ENCODE measurements at regions of chr16 and their contacts with region 1.

Region 1: DNA sequence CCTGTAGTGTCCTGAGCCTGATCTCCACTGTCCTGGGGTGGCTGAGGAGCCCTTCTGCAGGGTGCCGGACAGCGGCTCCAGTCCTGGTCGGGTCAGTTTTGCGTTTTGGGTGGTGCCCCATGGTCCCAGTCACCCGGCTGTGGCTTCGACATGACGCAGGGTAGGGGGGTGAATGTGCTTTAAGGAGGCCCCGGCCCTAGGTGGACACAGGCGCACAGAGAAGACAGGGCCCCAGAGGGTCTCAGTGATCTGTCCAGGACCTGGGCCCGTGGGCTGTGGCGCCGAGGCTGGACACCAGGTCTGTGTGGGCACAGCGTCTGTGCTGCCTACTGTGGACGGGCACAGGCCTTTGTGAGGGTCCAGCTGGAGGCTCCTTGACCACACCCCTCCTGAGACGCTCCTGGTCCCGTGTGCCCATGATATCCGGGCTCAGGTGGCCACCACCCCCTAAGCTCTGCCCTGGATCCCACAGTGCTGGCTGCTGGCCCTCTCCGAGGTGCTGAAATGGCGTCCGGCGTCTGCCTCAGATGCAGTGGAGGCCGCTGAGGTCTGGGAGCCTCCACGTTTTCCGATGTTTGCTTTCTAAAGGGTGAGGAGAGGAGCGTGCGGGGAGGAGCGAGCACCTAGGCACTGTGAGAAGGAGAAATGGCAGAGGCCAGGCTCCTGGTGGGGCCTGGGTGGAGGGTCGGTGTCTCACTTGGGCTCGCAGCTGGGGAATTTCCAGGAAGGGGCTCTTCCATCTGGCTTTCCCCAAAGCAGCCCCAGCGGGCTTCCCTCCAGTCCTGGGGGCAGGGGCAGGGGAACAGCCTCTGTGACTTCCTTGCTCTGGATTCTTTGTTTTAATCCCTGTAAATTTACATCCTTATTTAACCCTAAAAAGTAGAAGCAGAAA is 56.1 kb upstream of the ACSF3 start:
- DNase-seq: no peak
- ATAC-seq: no peak
- H3K4me3 ChIP-seq: no peak overlapping the region
- H3K27ac ChIP-seq: no peak overlapping the region
- H3K4me1 ChIP-seq: no peaks in the 10 kb centered on the region
- H3K27me3 ChIP-seq: peaks cover 25 to 48% (median 45%) of the 10 kb centered on the region in 3 donors
- CTCF ChIP-seq: no peak
- POLR2A ChIP-seq: no peak

Region 2: DNA sequence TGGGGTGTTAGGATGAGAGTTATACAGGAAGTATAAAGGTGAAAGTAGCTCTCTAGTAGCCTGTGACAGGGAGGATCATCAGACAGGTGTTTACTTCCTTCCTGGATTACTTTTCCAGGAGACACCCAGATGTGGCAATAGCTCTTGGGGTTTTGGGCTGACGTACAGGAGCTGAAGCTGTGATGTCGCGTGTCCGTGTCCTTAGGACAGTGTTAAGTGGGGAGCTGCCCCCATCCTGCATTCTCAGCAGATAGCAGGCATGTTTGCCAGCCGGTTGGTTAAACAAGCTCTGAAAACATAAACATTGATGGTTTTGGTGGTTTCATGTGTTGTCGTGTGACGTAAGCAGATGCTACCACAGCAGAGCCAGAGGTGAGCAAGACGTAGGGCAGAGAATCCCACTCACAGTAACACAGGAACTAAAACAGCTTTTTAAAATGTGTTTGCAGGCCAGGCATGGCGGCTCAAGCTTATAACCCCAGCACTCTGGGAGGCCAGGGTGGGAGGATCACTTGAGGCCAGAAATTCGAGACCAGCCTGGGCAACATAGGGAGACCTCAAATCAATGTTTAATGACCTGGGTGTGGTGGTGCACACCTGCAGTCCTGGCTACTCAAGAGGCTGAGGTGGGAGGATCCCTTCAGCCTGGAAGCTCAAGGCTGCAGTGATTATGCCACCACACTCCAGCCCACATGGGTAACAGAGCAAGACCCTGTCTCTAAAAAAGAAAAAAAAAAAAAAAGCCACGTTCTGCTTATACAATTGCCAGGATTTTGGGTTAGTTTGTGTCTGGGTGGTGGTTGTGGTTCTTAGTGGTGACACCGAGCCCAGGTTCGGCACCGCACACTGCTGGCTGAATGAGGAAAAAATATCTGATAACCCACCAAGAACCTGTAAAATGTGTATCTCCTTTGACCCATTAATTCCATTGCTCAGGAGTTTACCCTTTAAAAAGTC is 417.4 kb before region 1 on chr16:
- in situ Hi-C with region 1: no loop called
- intact Hi-C with region 1: no loop called
- DNase-seq: no peak
- ATAC-seq: no peak
- H3K4me3 ChIP-seq: no peak overlapping the region
- H3K27ac ChIP-seq: no peak overlapping the region
- H3K4me1 ChIP-seq: peaks cover 0 to 5% of the 10 kb centered on the region in 2 donors
- H3K27me3 ChIP-seq: no peaks in the 10 kb centered on the region
- CTCF ChIP-seq: no peak
- POLR2A ChIP-seq: no peak

Region 3: GRCh38 chr16:89132291-89133005 is 94.9 kb after region 1 on chr16:
- in situ Hi-C with region 1: no loop called
- intact Hi-C with region 1: no loop called
- DNase-seq: no peak
- ATAC-seq: no peak
- H3K4me3 ChIP-seq: no peak overlapping the region
- H3K27ac ChIP-seq: no peak overlapping the region
- H3K4me1 ChIP-seq: no peaks in the 10 kb centered on the region
- H3K27me3 ChIP-seq: no peaks in the 10 kb centered on the region
- CTCF ChIP-seq: no peak
- POLR2A ChIP-seq: no peak

Region 4: GRCh38 chr16:89142478-89143195 is 105.1 kb after region 1 on chr16:
- in situ Hi-C with region 1: no loop called
- intact Hi-C with region 1: loop called (anchors 5 kb)
- DNase-seq: no peak
- ATAC-seq: no peak
- H3K4me3 ChIP-seq: no peak overlapping the region
- H3K27ac ChIP-seq: no peak overlapping the region
- H3K4me1 ChIP-seq: no peaks in the 10 kb centered on the region
- H3K27me3 ChIP-seq: no peaks in the 10 kb centered on the region
- CTCF ChIP-seq: no peak
- POLR2A ChIP-seq: no peak

Measured in gastrocnemius medialis (tissue), 4 donors.